HepG2 (cell line): ENCODE measurements at regions of chr10 and their contacts with region 1.

Region 1: DNA sequence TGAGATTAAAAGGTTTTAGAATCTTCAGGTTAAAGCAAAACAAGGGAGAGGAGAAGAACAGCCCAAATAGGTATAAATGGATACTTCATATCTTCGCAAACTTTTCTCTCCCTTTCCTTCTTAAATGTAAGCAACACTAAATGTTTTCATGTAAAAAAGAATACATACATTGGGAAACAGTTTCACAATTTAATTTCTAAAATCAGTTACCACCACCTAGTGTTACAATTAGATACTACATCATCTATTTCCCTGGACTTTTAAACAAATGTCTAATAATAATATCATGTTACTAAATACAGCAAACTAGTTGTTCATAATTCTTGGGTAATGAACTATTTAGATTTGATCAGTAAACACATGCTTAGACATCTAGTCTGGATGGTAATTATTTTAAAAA is 35.8 kb downstream of the MINDY3 start:
- DNase-seq: no peak
- ATAC-seq: no peak
- H3K4me3 ChIP-seq: no peak overlapping the region
- H3K27ac ChIP-seq: no peak overlapping the region
- H3K4me1 ChIP-seq: no peaks in the 10 kb centered on the region
- H3K27me3 ChIP-seq: no peaks in the 10 kb centered on the region
- CTCF ChIP-seq: peak; percentile 31
- EP300 ChIP-seq: no peak
- POLR2A ChIP-seq: no peak
- RAD21 ChIP-seq: no peak

Region 2: DNA sequence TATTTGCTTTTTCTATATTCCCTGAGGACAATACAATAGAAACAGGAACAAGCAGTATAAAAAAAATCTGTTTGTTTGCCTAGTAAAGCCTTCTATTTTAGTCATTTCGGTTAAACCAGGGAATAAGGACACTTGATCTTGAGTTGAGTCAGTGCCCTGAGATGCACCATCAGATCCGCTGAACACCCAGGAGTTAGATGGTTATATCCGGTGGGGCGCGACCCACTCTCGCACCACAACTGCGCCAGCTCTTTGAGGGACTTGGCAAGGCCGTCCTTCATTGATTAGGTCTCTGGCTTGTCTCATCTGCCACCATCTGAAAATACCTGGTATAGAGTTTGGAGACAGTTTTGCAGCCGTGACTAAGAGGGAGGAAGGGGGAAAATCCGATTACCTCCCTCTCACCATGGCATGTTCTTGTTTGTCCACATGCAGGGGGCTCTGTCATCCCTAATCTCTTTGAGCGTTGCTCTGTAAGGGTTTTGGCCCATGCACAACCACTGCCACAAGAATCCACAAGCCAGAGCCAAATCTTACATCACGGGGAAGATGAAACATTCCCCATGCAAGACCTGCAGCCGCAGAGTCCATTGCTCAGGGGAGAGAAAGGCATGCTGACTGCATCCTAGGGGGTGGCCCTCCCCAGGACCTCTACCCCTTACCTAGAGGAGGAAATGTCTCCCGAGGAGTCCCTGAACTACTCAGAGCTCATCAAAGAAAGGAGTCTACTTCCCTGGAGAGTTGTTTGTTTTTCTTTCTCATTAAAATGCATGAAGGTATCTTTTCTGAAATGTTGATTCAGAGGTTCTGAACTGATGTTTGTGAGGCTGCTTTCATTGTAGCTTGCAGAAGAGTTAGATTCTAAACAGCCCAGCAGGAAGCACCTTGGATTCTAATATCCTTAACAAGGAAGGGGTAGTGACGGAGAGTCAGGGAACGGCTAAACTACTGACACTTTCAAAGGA is 351.8 kb before region 1 on chr10:
- CTCF ChIA-PET with region 1: no interaction called
- POLR2A ChIA-PET with region 1: no interaction called
- in situ Hi-C with region 1: no loop called
- intact Hi-C with region 1: no loop called
- DNase-seq: no peak
- ATAC-seq: no peak
- H3K4me3 ChIP-seq: no peak overlapping the region
- H3K27ac ChIP-seq: no peak overlapping the region
- H3K4me1 ChIP-seq: no peaks in the 10 kb centered on the region
- H3K27me3 ChIP-seq: peaks cover 5 to 27% of the 10 kb centered on the region in 2 experiments; a peak in 4 of 5 replicates
- CTCF ChIP-seq: no peak
- EP300 ChIP-seq: no peak
- POLR2A ChIP-seq: no peak
- RAD21 ChIP-seq: no peak

Region 3: GRCh38 chr10:15642095-15642494 is 182.4 kb before region 1 on chr10:
- CTCF ChIA-PET with region 1: no interaction called
- POLR2A ChIA-PET with region 1: no interaction called
- in situ Hi-C with region 1: no loop called
- intact Hi-C with region 1: loop called (anchors 5 kb)
- DNase-seq: no peak
- ATAC-seq: no peak
- H3K4me3 ChIP-seq: no peak overlapping the region
- H3K27ac ChIP-seq: no peak overlapping the region
- H3K4me1 ChIP-seq: no peaks in the 10 kb centered on the region
- H3K27me3 ChIP-seq: peaks cover 1 to 32% of the 10 kb centered on the region in 2 experiments; a peak in 2 of 5 replicates
- CTCF ChIP-seq: no peak
- EP300 ChIP-seq: no peak
- POLR2A ChIP-seq: no peak
- RAD21 ChIP-seq: no peak